CD4-positive, alpha-beta memory T cell (primary cell): ENCODE measurements at regions of chr16 and their contacts with region 1.

Region 1: GRCh38 chr16:23640931-23641765 is at the starts of genes DCTN5 and PALB2:
- DNase-seq: peak; percentile 78 to 86 (median 80)
- H3K4me3 ChIP-seq: peak within 1 kb of the TSS; percentile 82 to 100
- H3K4me3 Mint-ChIP-seq: peak within 1 kb of the TSS; percentile 98 to 100 (median 99)
- H3K27ac ChIP-seq: peak within 1 kb of the TSS; percentile 85
- H3K27ac Mint-ChIP-seq: peak within 1 kb of the TSS; percentile 96 to 99 (median 98)
- H3K4me1 ChIP-seq: peaks cover 20% of the 10 kb centered on the region
- H3K4me1 Mint-ChIP-seq: peaks cover 24 to 49% (median 37%) of the 10 kb centered on the region in 4 donors
- H3K27me3 ChIP-seq: no peaks in the 10 kb centered on the region
- H3K27me3 Mint-ChIP-seq: no peaks in the 10 kb centered on the region
- total RNA-seq, gene DCTN5: 55.8 to 60.2 TPM
- total RNA-seq, gene PALB2: 12.4 to 15.0 TPM

Region 2: GRCh38 chr16:23595951-23596720 is 45.0 kb before region 1 on chr16 and contains the start of gene NDUFAB1:
- CTCF ChIA-PET with region 1: no interaction called
- POLR2A ChIA-PET with region 1: interaction called, 7 read pairs
- intact Hi-C with region 1: loop called (anchors 1 kb)
- DNase-seq: peak; percentile 87 to 89 (median 88)
- H3K4me3 ChIP-seq: peak within 1 kb of the TSS; percentile 81 to 91
- H3K4me3 Mint-ChIP-seq: peak within 1 kb of the TSS; percentile 79 to 90 (median 86)
- H3K27ac ChIP-seq: peak within 1 kb of the TSS; percentile 84
- H3K27ac Mint-ChIP-seq: peak within 1 kb of the TSS; percentile 77 to 91 (median 89)
- H3K4me1 ChIP-seq: peaks cover 16% of the 10 kb centered on the region
- H3K4me1 Mint-ChIP-seq: peaks cover 14 to 47% (median 28%) of the 10 kb centered on the region in 4 donors
- H3K27me3 ChIP-seq: no peaks in the 10 kb centered on the region
- H3K27me3 Mint-ChIP-seq: no peaks in the 10 kb centered on the region
- total RNA-seq, gene NDUFAB1: 45.4 to 45.7 TPM